Activated CD4-positive, alpha-beta T cell treated with anti-CD3 and anti-CD28 coated beads for 36 hours (primary cell): ENCODE measurements at regions of chr22 and their contacts with region 1.

Region 1: DNA sequence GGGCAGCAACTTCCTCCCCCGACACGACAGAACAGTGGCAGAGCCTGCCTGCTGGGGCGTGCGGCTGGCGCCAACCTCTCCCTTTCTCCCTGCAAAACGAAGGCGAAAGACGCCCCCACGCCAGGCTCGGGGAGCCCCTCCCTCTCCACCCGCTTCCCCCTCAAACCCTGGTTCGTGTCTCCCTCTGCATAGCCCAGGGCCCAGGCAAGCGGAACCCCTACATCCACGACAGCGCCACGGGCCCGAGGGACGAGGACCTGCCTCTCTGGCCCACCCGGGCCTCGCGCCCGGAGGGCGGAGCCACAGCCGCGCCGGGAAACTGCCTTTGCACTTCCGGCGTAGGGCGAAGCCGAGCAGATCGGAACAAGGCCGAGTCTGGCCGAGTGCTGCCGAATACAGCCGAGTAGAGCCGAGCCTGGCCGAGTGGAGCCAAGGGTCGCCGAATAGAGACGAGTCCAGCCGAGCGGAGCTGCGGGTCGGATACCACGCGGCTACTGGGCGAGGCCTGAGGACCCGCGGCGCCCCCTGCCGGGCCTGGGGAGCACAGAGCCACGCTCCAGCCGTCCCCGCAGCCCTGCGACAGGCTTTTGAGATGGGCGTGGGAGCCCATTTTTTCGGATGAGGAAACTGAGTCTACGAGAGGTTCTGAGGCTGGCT is 11.2 kb upstream of the C1QTNF6 start:
- DNase-seq: peak; percentile 100
- ATAC-seq: peak; percentile 98
- H3K4me3 Mint-ChIP-seq: peak overlapping the region; percentile 89
- H3K27ac Mint-ChIP-seq: peak overlapping the region; percentile 95
- H3K4me1 Mint-ChIP-seq: peaks cover 38% of the 10 kb centered on the region
- H3K27me3 Mint-ChIP-seq: no peaks in the 10 kb centered on the region

Region 2: DNA sequence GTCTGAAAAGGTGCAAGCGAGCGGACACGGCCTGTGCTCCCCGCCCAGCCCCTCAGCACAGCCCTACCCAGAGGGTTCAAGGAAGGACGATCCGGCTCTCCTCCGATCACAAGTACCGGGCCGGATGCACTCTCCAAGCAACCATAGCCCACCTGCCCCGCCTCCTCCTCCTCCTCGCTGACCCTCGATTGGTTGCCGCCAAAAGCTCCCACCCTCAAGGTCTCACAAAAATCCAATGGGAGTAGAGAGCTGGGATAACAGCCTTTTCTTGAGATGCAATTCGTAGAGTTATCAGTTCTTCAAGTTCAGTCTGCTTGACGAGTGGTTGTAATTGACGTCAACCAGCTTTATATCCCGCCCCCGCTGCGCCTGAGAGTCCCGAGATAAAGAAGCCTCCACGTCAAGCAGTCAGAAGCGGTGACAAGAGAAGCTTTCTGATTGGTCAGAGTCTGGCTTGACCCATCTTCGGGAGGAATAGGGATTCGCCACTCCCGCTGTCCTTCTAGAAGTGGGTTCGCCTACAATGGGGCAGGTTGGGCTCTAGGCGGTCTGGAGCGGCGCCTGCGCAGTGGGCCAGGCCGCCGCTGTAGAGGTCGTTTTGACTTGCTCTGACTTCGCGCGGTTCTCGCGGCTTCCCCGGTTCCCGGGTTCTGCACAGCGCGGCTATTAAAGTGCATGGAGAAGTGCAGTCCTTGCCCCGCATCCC is 423.1 kb before region 1 on chr22 and contains the start of gene IFT27:
- CTCF ChIA-PET with region 1: interaction called, 3 read pairs
- POLR2A ChIA-PET with region 1: no interaction called
- intact Hi-C with region 1: loop called (anchors 1 kb)
- DNase-seq: peak; percentile 98
- ATAC-seq: peak; percentile 97
- H3K4me3 Mint-ChIP-seq: peak within 1 kb of the TSS; percentile 84
- H3K27ac Mint-ChIP-seq: peak within 1 kb of the TSS; percentile 92
- H3K4me1 Mint-ChIP-seq: peaks cover 26% of the 10 kb centered on the region
- H3K27me3 Mint-ChIP-seq: no peaks in the 10 kb centered on the region
- total RNA-seq, gene IFT27: 14.9 to 21.6 TPM

Region 3: GRCh38 chr22:36986242-36986821 is 212.9 kb before region 1 on chr22:
- CTCF ChIA-PET with region 1: interaction called, 7 read pairs
- POLR2A ChIA-PET with region 1: no interaction called
- intact Hi-C with region 1: loop called (anchors 1 to 2 kb)
- DNase-seq: peak; percentile 81
- ATAC-seq: peak; percentile 83
- H3K4me3 Mint-ChIP-seq: no peak overlapping the region
- H3K27ac Mint-ChIP-seq: no peak overlapping the region
- H3K4me1 Mint-ChIP-seq: peaks cover 6% of the 10 kb centered on the region
- H3K27me3 Mint-ChIP-seq: peaks cover 24% of the 10 kb centered on the region

Region 4: DNA sequence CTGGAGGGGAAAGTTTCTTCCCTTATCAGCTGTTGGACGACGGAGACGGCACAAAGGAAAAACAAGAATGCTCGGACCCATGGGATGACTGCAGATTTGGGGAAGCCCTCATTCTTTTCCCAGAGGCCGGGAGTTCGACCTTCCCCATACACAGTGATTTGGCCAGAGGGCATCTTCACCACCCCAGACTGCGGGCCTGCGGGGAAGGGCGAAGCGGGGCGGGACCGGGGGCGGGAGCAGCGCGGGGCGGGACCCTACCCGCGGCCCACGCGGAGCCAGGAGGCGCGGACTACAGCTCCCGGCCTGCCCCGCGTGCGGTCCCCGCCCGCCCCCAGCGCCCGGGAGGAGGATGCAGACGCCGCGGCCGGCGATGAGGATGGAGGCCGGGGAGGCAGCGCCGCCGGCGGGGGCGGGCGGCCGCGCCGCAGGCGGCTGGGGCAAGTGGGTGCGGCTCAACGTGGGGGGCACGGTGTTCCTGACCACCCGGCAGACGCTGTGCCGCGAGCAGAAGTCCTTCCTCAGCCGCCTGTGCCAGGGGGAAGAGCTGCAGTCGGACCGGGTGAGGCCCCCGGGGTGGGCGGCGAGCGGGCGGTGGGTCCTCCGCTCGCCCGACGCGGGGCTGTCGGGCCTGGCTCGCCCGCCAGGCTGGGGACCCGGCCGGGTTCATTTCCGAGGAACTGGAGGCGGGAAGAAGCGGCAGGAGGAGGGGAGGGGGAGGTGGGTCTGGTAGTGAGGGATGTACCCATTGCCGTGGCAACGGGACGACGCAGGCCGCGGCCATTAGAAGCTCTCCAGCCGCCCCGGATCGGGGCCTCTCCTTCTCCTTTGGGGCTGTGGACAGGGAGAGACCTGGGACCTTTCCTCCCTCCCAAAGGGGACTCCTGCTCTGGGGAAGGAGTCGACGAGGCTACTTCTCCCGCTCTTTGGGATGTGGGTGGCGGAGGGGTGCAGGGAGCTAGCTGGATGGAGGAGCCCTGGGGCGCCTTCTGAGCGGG is 147.5 kb before region 1 on chr22 and contains the start of gene KCTD17:
- CTCF ChIA-PET with region 1: interaction called, 13 read pairs
- POLR2A ChIA-PET with region 1: no interaction called
- intact Hi-C with region 1: loop called in 1 of 2 experiments (anchors 1 kb)
- DNase-seq: peak; percentile 90
- ATAC-seq: peak; percentile 100
- H3K4me3 Mint-ChIP-seq: peak within 1 kb of the TSS; percentile 79
- H3K27ac Mint-ChIP-seq: peak within 1 kb of the TSS; percentile 67
- H3K4me1 Mint-ChIP-seq: peaks cover 6% of the 10 kb centered on the region
- H3K27me3 Mint-ChIP-seq: no peaks in the 10 kb centered on the region
- total RNA-seq, gene KCTD17: 32.5 to 36.8 TPM

Region 5: GRCh38 chr22:37148742-37149665 is 50.2 kb before region 1 on chr22:
- CTCF ChIA-PET with region 1: interaction called, 7 read pairs
- POLR2A ChIA-PET with region 1: interaction called, 4 read pairs
- intact Hi-C with region 1: loop called (anchors 1 to 5 kb)
- DNase-seq: no peak
- ATAC-seq: no peak
- H3K4me3 Mint-ChIP-seq: peak overlapping the region; percentile 84
- H3K27ac Mint-ChIP-seq: peak overlapping the region; percentile 91
- H3K4me1 Mint-ChIP-seq: peaks cover 56% of the 10 kb centered on the region
- H3K27me3 Mint-ChIP-seq: no peaks in the 10 kb centered on the region

Region 6: GRCh38 chr22:37218771-37219411 is 19.7 kb after region 1 on chr22:
- CTCF ChIA-PET with region 1: interaction called, 37 read pairs
- POLR2A ChIA-PET with region 1: interaction called, 3 read pairs
- intact Hi-C with region 1: loop called (anchors 1 to 2 kb)
- DNase-seq: peak; percentile 83
- ATAC-seq: peak; percentile 68
- H3K4me3 Mint-ChIP-seq: peak overlapping the region; percentile 78
- H3K27ac Mint-ChIP-seq: peak overlapping the region; percentile 94
- H3K4me1 Mint-ChIP-seq: peaks cover 79% of the 10 kb centered on the region
- H3K27me3 Mint-ChIP-seq: no peaks in the 10 kb centered on the region

Region 7: DNA sequence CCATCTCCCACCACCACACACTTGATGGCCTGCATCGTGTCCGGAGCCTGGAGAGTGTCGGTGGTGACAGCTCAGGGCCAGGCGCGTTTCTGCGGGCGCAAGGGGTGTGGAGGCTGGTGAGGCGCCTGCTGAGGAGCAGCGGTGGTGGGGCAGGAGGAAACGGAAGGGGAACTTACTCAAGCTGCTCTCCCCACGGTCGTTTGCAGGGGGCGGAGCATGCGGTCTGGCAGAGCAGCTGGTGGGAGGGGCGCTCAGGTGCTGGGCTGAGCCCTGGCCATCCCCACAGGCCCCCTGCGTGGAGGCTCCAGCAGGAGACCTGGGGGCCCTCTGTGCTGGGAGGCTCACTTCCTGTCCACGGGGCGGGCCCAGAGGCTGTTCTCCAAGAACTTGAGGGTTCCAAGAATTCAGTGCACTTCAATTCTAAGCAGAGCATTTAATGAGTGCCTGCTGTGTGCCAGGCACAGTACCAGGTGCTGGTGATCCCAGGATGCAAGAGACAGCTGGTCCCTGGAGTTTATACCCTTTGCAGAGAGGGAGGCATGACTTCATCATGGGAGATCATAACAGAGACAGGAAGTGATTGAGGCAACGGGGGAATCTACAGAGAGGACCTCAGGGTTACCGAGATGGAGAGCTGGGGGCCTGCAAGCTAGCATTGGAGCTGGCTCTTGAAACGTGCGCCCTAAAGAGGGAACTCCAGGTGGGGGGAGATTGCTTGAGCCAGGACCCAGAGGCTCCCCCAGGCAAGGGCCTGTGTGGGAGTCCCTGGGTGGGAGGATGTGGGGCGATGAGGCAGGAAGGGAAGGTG is 45.1 kb after region 1 on chr22 and contains the start of gene RAC2:
- CTCF ChIA-PET with region 1: interaction called, 6 read pairs
- POLR2A ChIA-PET with region 1: interaction called, 4 read pairs
- intact Hi-C with region 1: loop called (anchors 1 to 2 kb)
- DNase-seq: peak; percentile 97
- ATAC-seq: peak; percentile 60
- H3K4me3 Mint-ChIP-seq: peak within 1 kb of the TSS; percentile 92
- H3K27ac Mint-ChIP-seq: peak within 1 kb of the TSS; percentile 94
- H3K4me1 Mint-ChIP-seq: peaks cover 47% of the 10 kb centered on the region
- H3K27me3 Mint-ChIP-seq: no peaks in the 10 kb centered on the region
- total RNA-seq, gene RAC2: 692 to 930 TPM

Region 8: GRCh38 chr22:37561212-37562048 is 362.2 kb after region 1 on chr22:
- CTCF ChIA-PET with region 1: no interaction called
- POLR2A ChIA-PET with region 1: no interaction called
- intact Hi-C with region 1: no loop called
- DNase-seq: peak; percentile 92
- ATAC-seq: peak; percentile 71
- H3K4me3 Mint-ChIP-seq: peak overlapping the region; percentile 57
- H3K27ac Mint-ChIP-seq: peak overlapping the region; percentile 51
- H3K4me1 Mint-ChIP-seq: peaks cover 20% of the 10 kb centered on the region
- H3K27me3 Mint-ChIP-seq: peaks cover 45% of the 10 kb centered on the region